ENCODE measurements at regions of chr20 and their contacts with region 1.

Region 1: GRCh38 chr20:10427060-10427692 is 6.8 kb downstream of the MKKS start:
- DNase-seq: peak; percentile 31
- CTCF ChIP-seq: peak; percentile 76

Region 2: DNA sequence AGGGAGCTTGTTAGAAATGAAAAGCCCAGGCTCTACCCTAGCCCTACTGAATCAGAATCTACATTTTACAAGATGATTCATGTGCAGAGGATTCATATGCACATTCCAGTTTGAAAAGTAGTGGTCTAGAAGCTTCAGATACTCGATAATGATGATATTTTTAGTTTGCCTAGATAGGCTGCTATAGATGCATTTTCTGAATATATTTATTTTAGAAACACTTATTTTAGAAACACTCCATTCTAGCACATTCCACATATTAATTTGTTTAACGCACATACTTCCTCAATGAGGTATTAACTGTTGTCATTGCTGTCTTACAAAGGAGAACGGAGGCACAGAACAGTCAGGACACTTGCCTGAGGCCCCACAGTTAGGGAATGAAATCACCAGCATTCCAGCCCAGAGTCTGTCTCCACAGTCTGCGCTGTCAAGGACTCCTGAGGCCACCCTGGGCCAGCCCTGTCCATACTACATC is 144.2 kb before region 1 on chr20:
- CTCF ChIA-PET with region 1: no interaction called
- POLR2A ChIA-PET with region 1: no interaction called
- DNase-seq: no peak
- CTCF ChIP-seq: no peak

Region 3: GRCh38 chr20:10404959-10405530 is 22.1 kb before region 1 on chr20:
- CTCF ChIA-PET with region 1: interaction called, 76 read pairs
- POLR2A ChIA-PET with region 1: no interaction called
- DNase-seq: no peak
- CTCF ChIP-seq: no peak

Region 4: GRCh38 chr20:10412591-10413408 is 14.4 kb before region 1 on chr20:
- CTCF ChIA-PET with region 1: interaction called, 76 read pairs
- POLR2A ChIA-PET with region 1: no interaction called
- DNase-seq: no peak
- CTCF ChIP-seq: no peak

Measured in GM10248 (cell line).